Natural killer cell (primary cell): ENCODE measurements at regions of chr6 and their contacts with region 1.

Region 1: GRCh38 chr6:99467509-99468106 is 42.5 kb upstream of the PNISR start:
- DNase-seq: peak in 1 of 2 donors; percentile 62
- ATAC-seq: peak in 1 of 3 donors; percentile 45
- H3K4me3 ChIP-seq: no peak overlapping the region
- H3K4me3 Mint-ChIP-seq: no peak overlapping the region
- H3K27ac ChIP-seq: no peak overlapping the region
- H3K27ac Mint-ChIP-seq: no peak overlapping the region
- H3K4me1 ChIP-seq: no peaks in the 10 kb centered on the region
- H3K4me1 Mint-ChIP-seq: no peaks in the 10 kb centered on the region
- H3K27me3 ChIP-seq: no peaks in the 10 kb centered on the region
- H3K27me3 Mint-ChIP-seq: no peaks in the 10 kb centered on the region
- CTCF ChIP-seq: peak; percentile 85

Region 2: GRCh38 chr6:99746261-99746895 is 278.8 kb after region 1 on chr6:
- intact Hi-C with region 1: loop called (anchors 1 kb)
- DNase-seq: peak; percentile 18 to 81
- ATAC-seq: peak; percentile 73 to 83 (median 76)
- H3K4me3 ChIP-seq: no peak overlapping the region
- H3K4me3 Mint-ChIP-seq: no peak overlapping the region
- H3K27ac ChIP-seq: no peak overlapping the region
- H3K27ac Mint-ChIP-seq: no peak overlapping the region
- H3K4me1 ChIP-seq: no peaks in the 10 kb centered on the region
- H3K4me1 Mint-ChIP-seq: no peaks in the 10 kb centered on the region
- H3K27me3 ChIP-seq: peaks cover 6% of the 10 kb centered on the region
- H3K27me3 Mint-ChIP-seq: peaks cover 25 to 33% of the 10 kb centered on the region in 2 donors
- CTCF ChIP-seq: peak; percentile 85

Region 3: DNA sequence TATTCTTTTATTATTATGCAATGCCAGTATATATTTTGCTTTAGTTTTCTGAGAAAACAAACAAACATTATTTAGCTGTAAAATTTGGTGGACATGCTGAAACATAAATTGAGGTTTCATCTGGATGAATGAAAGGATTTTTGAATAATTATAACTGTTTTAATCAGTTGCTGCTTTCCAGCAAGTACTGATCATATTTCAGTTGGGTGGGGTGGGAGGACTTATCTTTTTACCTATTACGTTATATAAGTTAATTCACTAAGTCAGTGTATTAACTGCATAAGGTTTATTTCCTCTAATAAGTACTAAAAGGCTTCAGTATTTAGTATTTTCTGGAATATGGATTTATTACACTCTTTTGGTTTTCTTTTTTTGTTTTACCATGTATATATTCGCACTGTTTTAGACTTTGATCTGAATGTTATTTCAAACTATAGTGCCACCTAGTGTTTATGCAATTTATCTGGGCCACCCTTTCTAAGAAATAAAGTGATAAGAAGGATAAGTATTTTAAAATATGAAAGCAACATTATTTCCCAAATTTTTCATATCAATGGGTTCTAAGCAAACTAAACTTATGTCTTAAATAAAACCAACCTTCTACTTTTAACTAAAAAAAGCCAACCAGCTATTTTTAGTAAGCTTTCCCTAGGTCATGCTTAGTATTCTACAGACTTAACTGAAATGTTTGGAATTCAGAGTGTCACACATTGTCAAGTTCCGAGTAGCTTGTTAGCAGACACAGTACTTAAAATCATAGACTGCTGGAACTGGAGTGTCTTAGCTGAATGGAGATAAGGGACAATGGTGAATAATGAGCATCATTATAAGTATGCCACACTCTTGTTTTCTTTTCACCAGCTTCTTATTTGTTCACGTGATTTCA is 631.8 kb after region 1 on chr6:
- intact Hi-C with region 1: loop called (anchors 10 kb)
- DNase-seq: peak in 1 of 2 donors; percentile 7
- ATAC-seq: no peak
- H3K4me3 ChIP-seq: no peak overlapping the region
- H3K4me3 Mint-ChIP-seq: no peak overlapping the region
- H3K27ac ChIP-seq: no peak overlapping the region
- H3K27ac Mint-ChIP-seq: no peak overlapping the region
- H3K4me1 ChIP-seq: no peaks in the 10 kb centered on the region
- H3K4me1 Mint-ChIP-seq: no peaks in the 10 kb centered on the region
- H3K27me3 ChIP-seq: no peaks in the 10 kb centered on the region
- H3K27me3 Mint-ChIP-seq: no peaks in the 10 kb centered on the region
- CTCF ChIP-seq: peak; percentile 9

Region 4: GRCh38 chr6:100664274-100665040 is 1196.8 kb after region 1 on chr6:
- intact Hi-C with region 1: loop called (anchors 10 kb)
- DNase-seq: peak in 1 of 2 donors; percentile 59
- ATAC-seq: peak in 2 of 3 donors; percentile 53 to 66
- H3K4me3 ChIP-seq: no peak overlapping the region
- H3K4me3 Mint-ChIP-seq: no peak overlapping the region
- H3K27ac ChIP-seq: peak overlapping the region; percentile 48
- H3K27ac Mint-ChIP-seq: peak overlapping the region; percentile 43 to 65
- H3K4me1 ChIP-seq: no peaks in the 10 kb centered on the region
- H3K4me1 Mint-ChIP-seq: peaks cover 0 to 6% of the 10 kb centered on the region in 2 donors
- H3K27me3 ChIP-seq: no peaks in the 10 kb centered on the region
- H3K27me3 Mint-ChIP-seq: no peaks in the 10 kb centered on the region
- CTCF ChIP-seq: peak; percentile 77